ENCODE measurements at regions of chr10 and their contacts with region 1.

Region 1: DNA sequence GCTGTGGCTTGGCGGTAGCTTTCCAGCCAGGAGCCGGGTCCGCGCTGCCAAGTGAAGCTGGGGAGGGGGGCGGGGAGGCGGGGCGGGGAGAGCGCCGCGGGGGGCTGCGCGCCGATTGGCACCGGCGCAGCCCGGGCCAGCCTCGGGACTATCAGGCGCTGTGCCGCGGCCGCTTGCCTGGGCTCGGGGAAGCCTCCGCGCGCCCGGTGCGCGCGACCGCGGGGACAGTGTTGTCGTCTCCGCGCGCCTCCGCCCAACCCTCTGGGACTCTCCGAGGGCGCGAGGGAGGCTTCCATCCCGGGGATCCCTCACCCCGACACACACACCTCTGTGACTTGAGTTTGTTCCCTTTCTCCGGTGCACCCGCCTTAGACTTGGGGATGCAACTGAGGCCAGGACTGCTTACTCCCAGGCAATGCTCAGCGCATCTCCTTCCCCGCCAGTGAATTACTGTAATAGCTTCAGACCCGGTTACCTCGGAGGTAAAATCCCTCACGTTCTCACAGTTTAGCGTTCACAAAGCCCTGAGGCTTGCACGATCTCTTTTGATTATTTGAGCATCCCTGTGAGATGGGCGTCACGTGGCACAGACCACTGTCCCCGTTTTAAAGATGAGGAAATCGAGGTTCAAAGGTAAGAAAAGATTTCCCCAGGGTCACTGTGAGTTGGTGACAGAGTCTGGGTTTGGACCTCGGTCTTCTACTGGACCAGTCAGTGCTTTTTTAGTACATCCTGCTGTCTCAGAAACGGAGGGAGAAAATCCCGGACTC is at the start of gene NKX1-2:
- DNase-seq: peak in 1 of 2 experiments; percentile 89
- H3K4me3 ChIP-seq: peak within 1 kb of the TSS; percentile 45 to 72 (median 66)
- H3K27ac ChIP-seq: no peak within 1 kb of the TSS
- H3K4me1 ChIP-seq: peaks cover 17 to 39% (median 27%) of the 10 kb centered on the region in 4 experiments
- H3K27me3 ChIP-seq: peaks cover 1 to 50% (median 38%) of the 10 kb centered on the region in 4 experiments
- CTCF ChIP-seq: no peak
- EP300 ChIP-seq: no peak
- POLR2A ChIP-seq: no peak
- RAD21 ChIP-seq: no peak
- total RNA-seq, gene NKX1-2: 33.9 and 34.9 TPM in 2 replicates

Region 2: GRCh38 chr10:124461438-124462347 is 11.5 kb after region 1 on chr10 and contains the start of gene LHPP:
- CTCF ChIA-PET with region 1: interaction called, 14 read pairs
- POLR2A ChIA-PET with region 1: interaction called, 36 read pairs
- DNase-seq: peak in 1 of 2 experiments; percentile 92
- H3K4me3 ChIP-seq: peak within 1 kb of the TSS; percentile 69 to 91 (median 72)
- H3K27ac ChIP-seq: no peak within 1 kb of the TSS; the same call in 1 of the 2 replicates
- H3K4me1 ChIP-seq: peaks cover 11 to 36% (median 23%) of the 10 kb centered on the region in 4 experiments
- H3K27me3 ChIP-seq: no peaks in the 10 kb centered on the region
- CTCF ChIP-seq: peak in 2 of 3 experiments; percentile 5 to 15; a peak in 2 of 4 replicates
- EP300 ChIP-seq: no peak
- POLR2A ChIP-seq: peak in 1 of 2 experiments; percentile 48; a peak in 1 of 3 replicates
- RAD21 ChIP-seq: no peak; a peak in 1 of 4 replicates
- total RNA-seq, gene LHPP: 26.0 and 27.5 TPM in 2 replicates

Region 3: GRCh38 chr10:124482236-124482800 is 32.1 kb after region 1 on chr10:
- CTCF ChIA-PET with region 1: interaction called, 14 read pairs
- POLR2A ChIA-PET with region 1: no interaction called
- DNase-seq: no peak
- H3K4me3 ChIP-seq: no peak overlapping the region
- H3K27ac ChIP-seq: no peak overlapping the region
- H3K4me1 ChIP-seq: peaks cover 4 to 18% (median 9%) of the 10 kb centered on the region in 4 experiments
- H3K27me3 ChIP-seq: no peaks in the 10 kb centered on the region
- CTCF ChIP-seq: no peak
- EP300 ChIP-seq: no peak
- POLR2A ChIP-seq: no peak
- RAD21 ChIP-seq: no peak